ENCODE measurements at regions of chr4 and their contacts with region 1.

Region 1: GRCh38 chr4:10671366-10671765 is 13.2 kb downstream of the CLNK start:
- DNase-seq: peak; percentile 45
- H3K4me3 Mint-ChIP-seq: no peak overlapping the region
- H3K27ac Mint-ChIP-seq: peak overlapping the region; percentile 59
- H3K4me1 Mint-ChIP-seq: peaks cover 26% of the 10 kb centered on the region
- H3K27me3 Mint-ChIP-seq: no peaks in the 10 kb centered on the region

Region 2: DNA sequence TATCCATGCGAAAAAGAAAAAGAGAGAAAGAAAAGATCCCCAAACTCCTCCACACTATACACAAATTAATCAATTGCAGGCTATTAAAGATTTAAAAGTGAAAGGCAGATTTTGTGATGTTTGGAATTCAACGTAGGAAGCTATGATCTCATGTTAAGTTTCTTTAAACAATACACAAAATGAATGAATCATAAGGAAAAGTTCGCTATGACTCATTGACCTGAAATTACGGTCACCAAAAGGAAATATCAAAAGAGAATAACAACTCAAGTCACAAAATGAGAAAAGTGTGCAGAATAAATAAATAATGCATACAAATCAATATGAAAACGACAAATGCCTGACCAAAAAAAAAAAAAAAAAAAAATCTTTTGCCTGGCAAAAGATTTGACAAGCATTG is 15.4 kb before region 1 on chr4:
- CTCF ChIA-PET with region 1: interaction called, 3 read pairs
- intact Hi-C with region 1: loop called (anchors 1 kb)
- DNase-seq: no peak
- H3K4me3 Mint-ChIP-seq: no peak overlapping the region
- H3K27ac Mint-ChIP-seq: no peak overlapping the region
- H3K4me1 Mint-ChIP-seq: peaks cover 23% of the 10 kb centered on the region
- H3K27me3 Mint-ChIP-seq: no peaks in the 10 kb centered on the region

Region 3: GRCh38 chr4:10730590-10730989 is 59.2 kb after region 1 on chr4:
- CTCF ChIA-PET with region 1: no interaction called
- intact Hi-C with region 1: loop called (anchors 1 kb)
- DNase-seq: no peak
- H3K4me3 Mint-ChIP-seq: no peak overlapping the region
- H3K27ac Mint-ChIP-seq: no peak overlapping the region
- H3K4me1 Mint-ChIP-seq: peaks cover 39% of the 10 kb centered on the region
- H3K27me3 Mint-ChIP-seq: no peaks in the 10 kb centered on the region

Measured in activated naive CD4-positive, alpha-beta T cell treated with anti-CD3 and anti-CD28 coated beads for 36 hours (primary cell).